ENCODE measurements at regions of chr18 and their contacts with region 1.

Region 1: DNA sequence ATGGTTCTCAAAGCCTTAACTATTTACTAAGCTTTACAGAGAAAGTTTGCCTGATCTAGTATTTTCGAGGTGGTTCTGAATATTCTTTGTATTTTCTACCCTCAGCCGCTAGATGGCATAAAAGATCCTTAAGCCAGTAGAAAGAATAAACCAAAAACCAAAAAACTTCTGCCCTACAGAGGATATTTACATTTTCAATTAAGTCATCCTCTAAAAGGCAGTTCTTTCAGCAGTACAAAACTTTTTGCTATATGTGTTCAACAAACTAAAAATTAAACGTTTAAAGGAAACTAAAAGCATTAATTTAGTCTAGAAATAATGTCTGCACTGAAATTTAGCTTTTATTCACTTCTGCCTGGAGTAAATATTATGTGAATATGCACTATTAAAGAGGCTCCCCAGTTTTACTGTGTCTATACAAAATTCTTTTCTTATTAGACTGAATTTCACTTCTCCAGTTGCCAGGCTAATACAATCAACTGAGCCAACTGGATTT is 297.5 kb downstream of the PIEZO2 start:
- H3K4me3 Mint-ChIP-seq: no peak overlapping the region
- H3K27ac Mint-ChIP-seq: no peak overlapping the region
- H3K4me1 Mint-ChIP-seq: no peaks in the 10 kb centered on the region
- H3K27me3 Mint-ChIP-seq: peaks cover 5% of the 10 kb centered on the region

Region 2: GRCh38 chr18:9153256-9153655 is 1698.6 kb before region 1 on chr18:
- intact Hi-C with region 1: no loop called
- H3K4me3 Mint-ChIP-seq: no peak overlapping the region
- H3K27ac Mint-ChIP-seq: peak overlapping the region; percentile 63
- H3K4me1 Mint-ChIP-seq: peaks cover 66% of the 10 kb centered on the region
- H3K27me3 Mint-ChIP-seq: no peaks in the 10 kb centered on the region

Region 3: DNA sequence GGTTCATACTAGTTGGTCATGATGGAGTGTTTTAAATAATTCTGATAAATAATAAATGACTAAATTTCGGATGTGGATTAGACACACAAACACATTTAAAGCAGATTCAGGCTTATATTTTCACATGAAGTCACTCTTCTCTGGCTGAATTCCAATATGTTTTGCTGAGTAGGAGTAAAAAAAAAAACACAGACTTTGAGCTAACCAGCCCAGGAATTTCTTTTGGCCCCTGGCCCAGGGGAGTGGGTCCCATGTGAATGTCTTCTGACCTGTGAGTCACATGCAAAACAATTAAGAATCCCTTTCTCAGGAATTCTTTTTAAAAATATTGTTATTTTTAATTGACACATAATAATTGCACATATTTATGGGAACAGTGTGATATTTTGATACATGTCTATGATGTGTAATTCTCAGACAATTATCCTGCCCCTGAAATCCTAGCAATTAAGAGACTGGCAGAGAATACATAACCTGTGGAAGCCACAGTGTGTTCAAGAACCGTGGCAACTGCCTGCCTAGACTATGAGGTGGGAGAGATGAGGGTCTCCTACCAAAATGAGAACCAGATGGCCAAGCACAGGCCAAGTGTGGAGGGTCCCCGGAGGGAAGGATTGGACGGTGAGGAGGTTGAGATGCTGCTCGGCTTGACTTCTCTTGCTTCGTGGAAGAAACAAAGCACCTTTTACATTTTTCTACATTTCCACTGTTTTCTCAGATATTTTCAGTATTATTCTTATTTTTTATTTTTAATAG is 61.1 kb after region 1 on chr18:
- intact Hi-C with region 1: no loop called
- H3K4me3 Mint-ChIP-seq: no peak overlapping the region
- H3K27ac Mint-ChIP-seq: no peak overlapping the region
- H3K4me1 Mint-ChIP-seq: no peaks in the 10 kb centered on the region
- H3K27me3 Mint-ChIP-seq: no peaks in the 10 kb centered on the region

Region 4: GRCh38 chr18:10965119-10965518 is 113.2 kb after region 1 on chr18:
- intact Hi-C with region 1: no loop called
- H3K4me3 Mint-ChIP-seq: no peak overlapping the region
- H3K27ac Mint-ChIP-seq: no peak overlapping the region
- H3K4me1 Mint-ChIP-seq: no peaks in the 10 kb centered on the region
- H3K27me3 Mint-ChIP-seq: no peaks in the 10 kb centered on the region

Region 5: GRCh38 chr18:11040823-11041656 is 189.2 kb after region 1 on chr18:
- intact Hi-C with region 1: loop called (anchors 1 kb)
- H3K4me3 Mint-ChIP-seq: no peak overlapping the region
- H3K27ac Mint-ChIP-seq: no peak overlapping the region
- H3K4me1 Mint-ChIP-seq: no peaks in the 10 kb centered on the region
- H3K27me3 Mint-ChIP-seq: peaks cover 3% of the 10 kb centered on the region

Region 6: GRCh38 chr18:11149441-11150270 is 297.8 kb after region 1 on chr18 and contains the start of gene PIEZO2:
- intact Hi-C with region 1: loop called (anchors 5 kb)
- H3K4me3 Mint-ChIP-seq: peak within 1 kb of the TSS; percentile 64
- H3K27ac Mint-ChIP-seq: no peak within 1 kb of the TSS
- H3K4me1 Mint-ChIP-seq: peaks cover 7% of the 10 kb centered on the region
- H3K27me3 Mint-ChIP-seq: peaks cover 63% of the 10 kb centered on the region

Region 7: DNA sequence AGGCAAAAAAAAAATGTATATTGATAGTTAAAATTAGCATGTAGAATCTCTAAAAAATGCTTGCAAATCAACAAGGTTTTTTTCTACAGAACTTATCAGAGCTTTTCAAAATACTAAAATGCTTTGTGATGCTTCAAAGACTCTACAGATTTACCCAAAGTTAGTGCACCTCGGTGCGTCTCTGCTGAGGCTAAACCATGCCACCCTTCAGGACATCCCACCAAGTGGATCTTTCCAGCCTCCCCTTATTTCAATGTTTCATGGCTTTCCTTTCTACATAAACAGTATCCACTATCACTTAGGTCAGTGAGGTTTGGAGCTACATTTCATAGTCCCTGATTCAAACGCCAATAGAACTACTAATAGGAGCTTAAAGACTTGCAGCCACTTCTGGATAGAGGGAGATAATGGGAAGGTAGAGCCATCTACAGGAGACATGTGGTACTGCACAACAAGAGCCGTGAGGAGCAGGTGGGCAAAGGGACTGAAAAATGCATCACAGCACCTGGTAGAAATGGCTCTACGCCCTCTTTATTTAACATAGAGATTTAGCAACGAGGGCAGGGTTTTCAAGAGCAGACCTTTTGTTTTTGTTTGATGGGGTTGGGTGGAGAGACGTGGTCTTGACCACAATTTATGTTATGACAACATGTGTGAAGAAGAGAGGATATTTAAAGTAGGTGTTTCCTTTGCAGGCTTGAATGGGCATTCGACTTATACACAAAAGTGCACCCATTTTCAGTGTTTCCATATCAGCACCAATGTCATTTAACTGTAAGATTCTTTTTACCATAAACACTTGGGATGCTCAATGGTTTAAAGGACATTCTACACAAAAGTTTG is 701.4 kb after region 1 on chr18:
- intact Hi-C with region 1: loop called (anchors 1 kb)
- H3K4me3 Mint-ChIP-seq: no peak overlapping the region
- H3K27ac Mint-ChIP-seq: no peak overlapping the region
- H3K4me1 Mint-ChIP-seq: no peaks in the 10 kb centered on the region
- H3K27me3 Mint-ChIP-seq: peaks cover 3% of the 10 kb centered on the region

Measured in dendritic cell treated with granulocyte-macrophage colony-stimulating factor and Interleukin-4, amounts not matched to agents 40 ng/mL and 50 ng/mL, for 4 days (primary cell).